Vagina (tissue), 2 donors: ENCODE measurements at regions of chr7 and their contacts with region 1.

Region 1: DNA sequence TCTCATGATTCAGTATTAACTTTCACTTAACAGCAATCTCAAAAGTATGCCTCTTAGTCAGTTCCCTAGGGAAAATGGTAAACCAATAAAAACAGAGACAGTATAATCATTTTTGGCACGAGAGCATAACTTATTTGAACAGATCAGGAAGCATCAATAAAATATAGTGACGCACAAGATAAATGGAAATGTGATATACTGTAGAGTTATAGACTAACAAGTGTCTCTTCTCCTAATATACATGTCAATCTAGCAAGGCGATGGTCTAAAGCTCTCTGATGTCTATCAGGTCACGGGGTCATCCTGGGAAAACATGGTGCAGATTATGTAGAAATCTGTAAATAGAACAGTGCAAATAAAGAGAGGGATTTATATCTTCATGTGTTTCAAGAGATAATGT is 131.6 kb downstream of the HGF start:
- DNase-seq: no peak
- H3K4me3 ChIP-seq: no peak overlapping the region
- H3K27ac ChIP-seq: no peak overlapping the region
- H3K4me1 ChIP-seq: peaks cover 7% of the 10 kb centered on the region
- H3K27me3 ChIP-seq: no peaks in the 10 kb centered on the region
- CTCF ChIP-seq: no peak
- POLR2A ChIP-seq: no peak

Region 2: DNA sequence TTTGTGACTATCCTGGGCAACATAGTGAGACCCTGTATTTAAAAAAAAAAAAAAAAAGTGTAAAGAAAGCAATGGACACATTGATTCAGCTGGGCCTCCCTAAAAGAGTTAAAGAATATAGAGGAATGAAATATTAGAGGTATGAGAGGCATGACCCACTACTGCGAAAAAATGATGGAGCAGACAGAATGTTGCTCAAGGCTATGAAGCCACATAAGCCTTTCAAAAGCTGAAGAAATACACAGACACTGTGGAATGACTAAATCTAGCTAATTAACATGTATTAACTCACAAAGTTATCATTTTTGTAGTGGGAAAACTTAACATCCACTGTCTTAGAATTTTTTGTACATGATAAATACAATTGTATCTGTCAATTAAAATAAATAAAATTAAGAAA is 24.3 kb after region 1 on chr7:
- intact Hi-C with region 1: loop called (anchors 2 kb)
- DNase-seq: no peak
- H3K4me3 ChIP-seq: no peak overlapping the region
- H3K27ac ChIP-seq: no peak overlapping the region
- H3K4me1 ChIP-seq: no peaks in the 10 kb centered on the region
- H3K27me3 ChIP-seq: no peaks in the 10 kb centered on the region
- CTCF ChIP-seq: no peak
- POLR2A ChIP-seq: no peak

Region 3: DNA sequence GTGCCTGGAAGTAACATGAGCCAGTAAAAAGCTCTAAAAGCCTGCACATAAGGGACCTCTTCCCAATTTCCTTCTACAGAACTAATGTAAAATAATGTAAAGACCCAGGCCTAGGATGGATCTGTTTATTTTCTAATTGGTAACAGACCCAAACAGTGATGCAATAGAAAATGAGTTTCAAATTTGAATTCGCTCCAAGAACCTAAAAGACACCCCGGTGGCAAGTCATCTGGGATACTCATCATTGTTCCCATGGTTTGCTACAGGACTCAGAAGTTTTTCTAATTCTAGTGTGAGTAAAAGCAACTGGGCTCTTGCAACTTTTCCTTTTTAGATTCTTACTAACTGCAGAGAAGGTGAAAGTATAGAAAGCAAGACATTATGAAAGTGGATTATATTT is 1076.7 kb after region 1 on chr7:
- intact Hi-C with region 1: no loop called
- DNase-seq: no peak
- H3K4me3 ChIP-seq: no peak overlapping the region
- H3K27ac ChIP-seq: no peak overlapping the region
- H3K4me1 ChIP-seq: no peaks in the 10 kb centered on the region
- H3K27me3 ChIP-seq: no peaks in the 10 kb centered on the region
- CTCF ChIP-seq: no peak
- POLR2A ChIP-seq: no peak